H1 (cell line): ENCODE measurements at regions of chr16 and their contacts with region 1.

Region 1: DNA sequence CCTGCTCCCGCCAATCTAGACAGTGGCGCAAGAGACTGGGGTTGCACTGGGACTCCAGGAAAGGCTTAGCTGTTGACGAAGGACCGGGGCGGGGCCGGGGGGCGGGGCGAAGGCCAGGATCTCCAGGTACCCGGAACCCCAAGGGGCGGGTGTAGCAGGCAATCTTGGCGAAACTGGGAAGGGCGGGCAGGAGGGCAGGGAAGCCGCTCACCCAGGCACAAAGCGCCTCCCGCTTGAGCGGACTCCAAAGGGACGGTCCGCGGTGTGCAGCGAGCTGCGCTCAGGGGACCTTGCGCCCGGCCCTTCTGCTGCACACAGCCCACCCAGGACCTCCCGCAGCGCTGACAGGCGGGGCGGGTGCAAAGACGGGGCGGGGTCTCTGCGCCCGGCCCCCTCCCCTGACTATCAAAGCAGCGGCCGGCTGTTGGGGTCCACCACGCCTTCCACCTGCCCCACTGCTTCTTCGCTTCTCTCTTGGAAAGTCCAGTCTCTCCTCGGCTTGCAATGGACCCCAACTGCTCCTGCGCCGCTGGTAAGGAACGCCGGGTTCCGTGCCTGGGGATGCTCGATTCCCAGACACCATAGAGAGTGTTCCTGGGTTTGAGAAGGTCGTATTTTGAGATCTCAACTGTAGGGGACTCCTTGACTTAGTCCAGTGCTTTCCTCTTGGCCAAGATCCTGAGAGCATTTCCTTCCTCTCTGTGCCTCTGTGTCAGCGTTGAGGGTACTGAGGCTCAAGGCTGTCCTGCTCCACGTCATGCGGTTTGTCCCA is at the start of gene MT1F:
- DNase-seq: peak; percentile 64 to 86
- H3K4me3 ChIP-seq: peak within 1 kb of the TSS; percentile 52 to 76 (median 54)
- H3K27ac ChIP-seq: no peak within 1 kb of the TSS
- H3K4me1 ChIP-seq: peaks cover 0 to 12% (median 5%) of the 10 kb centered on the region in 4 experiments; a peak in 6 of 7 replicates
- H3K27me3 ChIP-seq: peaks cover 39 to 68% (median 62%) of the 10 kb centered on the region in 4 experiments
- CTCF ChIP-seq: no peak
- EP300 ChIP-seq: no peak
- POLR2A ChIP-seq: no peak
- RAD21 ChIP-seq: peak; percentile 15 to 35; a peak in 3 of 4 replicates
- total RNA-seq, gene MT1F: 5.2 and 5.9 TPM in 2 replicates

Region 2: DNA sequence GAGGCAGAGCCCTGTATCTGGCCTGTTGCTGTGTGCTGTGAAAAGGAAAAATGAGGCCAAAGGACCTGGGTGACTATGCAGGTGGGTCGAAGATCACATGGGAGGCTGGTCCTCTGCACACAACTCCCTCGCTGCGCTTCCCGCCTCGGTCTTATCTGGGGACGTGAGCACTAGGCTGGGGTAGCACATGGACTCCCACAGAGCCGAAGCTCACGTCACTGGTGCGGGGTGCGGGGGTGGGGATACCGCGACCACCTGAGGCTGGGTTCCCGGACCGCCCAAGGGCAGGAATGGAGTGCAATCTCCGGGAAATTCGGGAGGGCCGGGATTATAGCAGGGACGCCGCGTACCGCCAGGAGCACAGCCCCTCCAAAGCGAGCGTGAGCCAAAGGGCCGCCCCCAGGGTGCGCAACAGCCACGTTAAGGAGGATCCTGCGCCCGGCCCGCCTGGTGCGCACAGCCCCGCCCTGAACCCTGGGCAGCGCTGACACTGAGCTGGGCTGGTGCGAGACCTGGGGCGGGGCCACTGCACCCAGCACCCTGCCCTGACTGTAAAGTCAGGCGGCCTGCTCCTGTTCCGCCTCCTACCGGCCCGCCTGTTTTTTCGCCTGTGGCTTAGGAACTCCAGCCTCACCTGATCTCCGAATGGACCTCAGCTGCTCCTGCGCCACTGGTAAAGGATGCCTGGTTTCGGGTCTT is 14.5 kb before region 1 on chr16:
- CTCF ChIA-PET with region 1: interaction called, 28 read pairs
- POLR2A ChIA-PET with region 1: interaction called, 30 read pairs
- DNase-seq: peak in 1 of 2 experiments; percentile 67
- H3K4me3 ChIP-seq: peak overlapping the region; percentile 18 to 51 (median 34); a peak in 7 of 8 replicates
- H3K27ac ChIP-seq: no peak overlapping the region
- H3K4me1 ChIP-seq: peaks cover 3 to 20% (median 7%) of the 10 kb centered on the region in 4 experiments
- H3K27me3 ChIP-seq: peaks cover 84 to 100% (median 99%) of the 10 kb centered on the region in 4 experiments
- CTCF ChIP-seq: peak; percentile 39 to 50 (median 42)
- EP300 ChIP-seq: no peak
- POLR2A ChIP-seq: no peak
- RAD21 ChIP-seq: peak; percentile 32 to 36

Region 3: DNA sequence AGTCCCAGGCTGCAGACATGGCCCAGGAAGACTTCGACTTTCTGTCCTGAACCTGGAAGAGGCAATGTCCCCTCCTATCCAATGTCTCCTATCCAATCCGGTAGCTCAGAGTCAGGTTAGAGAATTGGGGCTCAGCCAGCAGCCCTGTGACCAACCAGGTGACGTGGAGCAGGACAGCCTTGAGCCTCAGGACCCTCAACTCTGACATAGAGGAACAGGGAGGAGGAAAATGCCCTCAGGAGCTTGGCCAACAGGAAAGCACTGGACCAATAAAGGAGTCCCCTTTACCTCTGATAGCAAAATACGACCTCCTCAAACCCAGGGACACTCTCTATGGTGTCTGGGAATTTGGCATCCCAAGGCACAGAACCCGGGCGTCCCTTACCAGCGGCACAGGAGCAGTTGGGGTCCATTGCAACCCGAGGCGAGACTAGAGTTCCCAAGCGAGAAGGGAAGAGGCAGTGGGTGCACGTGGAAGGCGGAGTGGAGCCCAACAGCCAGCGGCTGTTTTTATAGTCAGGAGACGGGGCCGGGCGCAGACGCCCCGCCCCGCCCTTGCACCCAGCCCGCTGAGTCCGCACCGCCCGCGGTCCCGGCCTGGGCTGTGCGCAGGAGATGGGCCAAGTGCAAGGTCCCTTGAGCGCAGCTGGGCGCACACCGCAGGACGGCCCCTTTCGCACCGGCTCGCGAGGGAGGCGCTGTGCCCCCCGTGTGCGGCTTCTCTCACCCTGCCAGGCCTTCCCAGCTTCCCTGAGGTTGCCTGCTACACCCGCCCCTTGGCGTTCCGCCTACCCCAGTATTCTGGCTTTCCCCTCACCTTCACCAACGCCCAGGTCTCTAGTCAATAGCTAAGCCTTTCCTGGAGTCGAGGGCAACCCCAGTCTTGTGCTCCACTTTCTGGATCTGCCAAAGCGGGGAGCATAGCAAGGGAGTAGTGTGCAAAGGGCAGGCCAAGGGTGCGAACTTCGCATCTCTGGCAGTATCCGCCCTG is 10.1 kb after region 1 on chr16 and contains the start of gene MT1G:
- CTCF ChIA-PET with region 1: interaction called, 4 read pairs
- POLR2A ChIA-PET with region 1: interaction called, 74 read pairs
- DNase-seq: peak in 1 of 2 experiments; percentile 70
- H3K4me3 ChIP-seq: peak within 1 kb of the TSS; percentile 13 to 53 (median 16); a peak in 5 of 8 replicates
- H3K27ac ChIP-seq: no peak within 1 kb of the TSS
- H3K4me1 ChIP-seq: peaks cover 3 to 16% (median 12%) of the 10 kb centered on the region in 4 experiments
- H3K27me3 ChIP-seq: peaks cover 81 to 98% (median 93%) of the 10 kb centered on the region in 4 experiments
- CTCF ChIP-seq: no peak
- EP300 ChIP-seq: no peak
- POLR2A ChIP-seq: no peak
- RAD21 ChIP-seq: no peak
- total RNA-seq, gene MT1G: 17.7 and 19.7 TPM in 2 replicates

Region 4: DNA sequence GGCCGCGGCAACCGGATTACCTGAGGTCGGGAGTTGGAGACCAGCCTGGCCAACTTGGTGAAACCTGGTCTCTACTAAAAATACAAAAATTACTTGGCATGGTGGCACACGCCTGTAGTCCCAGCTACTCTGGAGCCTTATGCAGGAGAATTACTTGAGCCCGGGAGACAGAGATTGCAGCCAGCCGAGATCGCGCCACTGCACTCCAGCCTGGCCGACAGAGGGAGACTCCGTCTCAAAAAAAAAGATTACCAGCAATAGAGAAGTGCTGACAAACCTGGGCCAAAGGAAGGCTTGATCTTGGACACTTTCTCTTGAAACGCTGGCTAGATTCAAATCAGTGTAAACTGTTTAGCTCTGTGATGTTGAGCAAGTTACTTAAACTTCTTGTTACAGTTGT is 16.2 kb after region 1 on chr16:
- CTCF ChIA-PET with region 1: interaction called, 9 read pairs
- POLR2A ChIA-PET with region 1: interaction called, 205 read pairs
- DNase-seq: no peak
- H3K4me3 ChIP-seq: no peak overlapping the region
- H3K27ac ChIP-seq: no peak overlapping the region
- H3K4me1 ChIP-seq: peaks cover 3 to 25% (median 15%) of the 10 kb centered on the region in 4 experiments
- H3K27me3 ChIP-seq: peaks cover 30 to 71% (median 52%) of the 10 kb centered on the region in 4 experiments
- CTCF ChIP-seq: peak; percentile 60 to 73 (median 64)
- EP300 ChIP-seq: no peak
- POLR2A ChIP-seq: no peak
- RAD21 ChIP-seq: peak; percentile 68 to 78